Dorsolateral prefrontal cortex (tissue), 120 donors: ENCODE measurements at regions of chr3 and their contacts with region 1.

Region 1: GRCh38 chr3:194333212-194333980 is 17.7 kb downstream of the CPN2 start:
- DNase-seq: peak; percentile 79 to 92 (median 86)
- H3K4me3 ChIP-seq: peak overlapping the region; percentile 27 to 73 (median 55)
- H3K27ac ChIP-seq: no peak overlapping the region
- H3K27me3 ChIP-seq: peaks cover 0 to 13% (median 0%) of the 10 kb centered on the region in 45 donors
- CTCF ChIP-seq: peak; percentile 96 to 100 (median 100)

Region 2: DNA sequence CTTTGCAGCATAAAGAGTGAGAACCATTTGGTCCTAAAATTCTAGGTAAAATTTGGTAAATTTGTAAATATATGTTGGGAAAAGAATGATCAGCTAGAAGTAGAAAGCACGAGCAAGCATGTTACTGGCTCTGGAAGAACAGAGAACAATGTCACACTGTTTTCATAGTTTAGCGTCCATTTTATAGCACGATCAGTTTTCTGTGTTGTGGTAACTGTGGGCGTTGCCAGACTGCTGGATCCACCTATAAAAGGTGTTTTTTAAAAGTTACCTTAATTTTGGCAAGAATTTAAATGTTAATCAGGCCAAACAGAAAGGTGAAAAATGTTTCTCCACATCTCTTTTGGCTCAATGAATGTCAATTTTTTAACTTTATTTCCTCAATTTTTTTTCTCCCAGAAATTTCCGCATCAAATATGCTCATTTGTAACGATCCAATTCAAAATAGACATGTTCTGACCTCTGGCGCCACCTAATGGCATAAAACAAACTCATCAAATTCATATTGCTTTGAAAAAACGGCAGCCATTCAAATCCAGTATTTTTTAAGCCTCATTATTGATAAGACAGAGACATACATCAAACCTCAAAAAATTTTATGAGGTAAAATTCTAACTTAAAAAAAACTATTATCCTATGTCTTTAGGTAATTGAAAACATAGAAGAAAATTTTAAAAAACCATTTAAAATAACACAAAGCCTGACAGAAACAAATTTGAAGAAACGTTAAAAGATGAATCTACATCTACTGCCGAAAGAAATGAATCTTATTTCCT is 71.2 kb after region 1 on chr3:
- intact Hi-C with region 1: loop called (anchors 2 to 5 kb)
- DNase-seq: peak in 1 of 10 donors; percentile 33
- H3K4me3 ChIP-seq: no peak overlapping the region
- H3K27ac ChIP-seq: peak overlapping the region in 3 of 59 donors; percentile 8 to 46 (median 37)
- H3K27me3 ChIP-seq: peaks cover 0 to 7% (median 0%) of the 10 kb centered on the region in 45 donors
- CTCF ChIP-seq: peak; percentile 60 to 92 (median 78)

Region 3: DNA sequence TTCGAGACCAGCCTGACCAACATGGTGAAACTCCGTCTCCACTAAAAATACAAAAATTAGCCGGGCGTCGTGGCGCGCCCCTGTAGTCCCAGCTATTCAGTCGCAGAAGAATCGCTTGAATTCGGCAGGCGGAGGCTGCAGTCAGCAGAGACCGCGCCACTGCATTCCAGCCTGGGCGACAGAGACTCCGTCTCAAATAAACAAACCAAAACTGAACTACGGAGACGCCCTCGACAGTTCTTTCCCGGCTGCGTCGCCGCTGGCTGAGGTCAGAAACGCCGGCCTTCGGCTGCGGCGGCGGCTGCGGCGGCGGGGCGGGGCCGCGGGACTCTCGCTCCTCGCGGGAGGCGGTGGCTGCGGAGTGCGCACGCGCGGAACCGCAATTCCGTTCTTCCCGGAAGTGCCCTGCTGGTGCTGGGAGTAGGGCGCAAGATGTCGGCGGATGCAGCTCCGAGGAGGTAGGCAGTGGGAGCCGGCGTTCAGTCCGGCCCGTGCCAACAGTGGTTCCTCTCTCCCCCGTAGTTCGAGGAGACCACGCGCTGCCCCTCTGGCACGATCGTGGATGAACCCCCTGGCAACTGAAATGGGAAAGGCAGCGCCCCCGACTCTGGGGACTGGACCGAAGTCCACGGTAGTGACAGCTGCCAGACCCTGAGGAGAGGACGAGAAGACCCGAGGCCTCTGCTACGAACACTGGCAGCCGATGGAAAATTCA is 250.4 kb after region 1 on chr3:
- intact Hi-C with region 1: loop called in 1 of 2 experiments (anchors 10 kb)
- DNase-seq: peak; percentile 88 to 96 (median 92)
- H3K4me3 ChIP-seq: peak overlapping the region; percentile 58 to 99 (median 89)
- H3K27ac ChIP-seq: peak overlapping the region; percentile 83 to 98 (median 95)
- H3K27me3 ChIP-seq: no peaks in the 10 kb centered on the region
- CTCF ChIP-seq: peak in 45 of 56 donors; percentile 1 to 67 (median 35)

Region 4: DNA sequence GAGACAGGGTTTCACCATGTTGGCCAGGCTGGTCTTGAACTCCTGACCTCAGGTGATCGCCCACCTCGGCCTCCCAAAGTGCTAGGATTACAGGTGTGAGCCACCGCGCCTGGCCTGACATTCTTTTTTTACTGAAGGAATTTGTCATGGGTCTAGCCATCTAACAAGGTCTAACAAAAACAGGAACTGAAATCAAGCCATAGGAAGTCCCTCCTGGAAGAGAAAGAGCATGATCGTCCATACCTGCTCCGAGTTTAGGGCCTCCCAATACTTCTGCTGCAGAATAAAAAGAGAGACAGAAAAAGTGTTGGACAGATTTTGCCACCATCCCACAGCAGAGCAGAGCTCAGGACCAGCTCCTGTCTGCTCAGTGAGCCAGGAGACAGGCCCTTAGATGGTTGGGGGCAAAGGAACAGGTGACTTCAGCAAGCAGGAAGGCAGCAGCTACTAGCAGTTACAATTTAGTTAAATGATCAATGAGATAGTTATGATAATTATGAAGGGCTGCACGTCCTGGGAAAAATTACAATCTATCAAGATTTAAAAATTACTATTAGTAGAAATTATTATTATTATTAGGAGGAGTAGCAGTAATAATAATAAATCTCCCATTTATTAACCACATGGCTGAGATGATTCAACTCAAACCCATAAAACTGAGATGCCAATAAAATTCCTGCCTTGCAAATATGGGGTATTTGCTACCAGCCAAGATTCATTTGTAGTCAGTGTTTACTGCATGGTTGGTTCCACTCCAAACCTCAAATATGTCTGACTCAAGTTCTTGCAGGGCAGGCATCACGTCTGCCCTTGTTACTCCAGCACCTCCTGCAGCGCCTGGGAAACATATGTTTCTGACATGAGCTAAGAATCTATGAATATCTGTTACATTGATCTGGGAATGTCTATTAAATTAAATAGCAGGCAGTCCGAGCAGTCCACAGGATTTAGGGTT is 259.7 kb after region 1 on chr3:
- intact Hi-C with region 1: loop called (anchors 10 kb)
- DNase-seq: no peak
- H3K4me3 ChIP-seq: no peak overlapping the region
- H3K27ac ChIP-seq: no peak overlapping the region
- H3K27me3 ChIP-seq: no peaks in the 10 kb centered on the region
- CTCF ChIP-seq: no peak

Region 5: GRCh38 chr3:194879991-194880939 is 546.9 kb after region 1 on chr3:
- intact Hi-C with region 1: no loop called
- DNase-seq: peak in 3 of 10 donors; percentile 20 to 49 (median 24)
- H3K4me3 ChIP-seq: no peak overlapping the region
- H3K27ac ChIP-seq: peak overlapping the region in 9 of 59 donors; percentile 7 to 66 (median 52)
- H3K27me3 ChIP-seq: peaks cover 0 to 5% (median 0%) of the 10 kb centered on the region in 45 donors
- CTCF ChIP-seq: no peak